ENCODE measurements at regions of chr22 and their contacts with region 1.

Region 1: GRCh38 chr22:25334162-25334490 is 114.7 kb downstream of the CRYBB2 start:
- DNase-seq: no peak
- CTCF ChIP-seq: peak; percentile 80

Region 2: GRCh38 chr22:25081409-25081824 is 252.7 kb before region 1 on chr22:
- in situ Hi-C with region 1: loop called (anchors 25 kb)
- DNase-seq: peak; percentile 75
- CTCF ChIP-seq: peak; percentile 67

Region 3: GRCh38 chr22:26610072-26610958 is 1276.2 kb after region 1 on chr22:
- in situ Hi-C with region 1: no loop called
- DNase-seq: peak; percentile 79
- CTCF ChIP-seq: no peak

Measured in GM13977 (cell line).